ENCODE measurements at regions of chr15 and their contacts with region 1.

Region 1: GRCh38 chr15:82046666-82047452 is 1.0 kb upstream of the MEX3B start:
- DNase-seq: peak; percentile 95 to 99 (median 98)
- H3K4me3 ChIP-seq: peak overlapping the region; percentile 80 to 96 (median 90)
- H3K27ac ChIP-seq: peak overlapping the region; percentile 81 to 89
- H3K4me1 ChIP-seq: peaks cover 0 to 29% (median 27%) of the 10 kb centered on the region in 4 experiments
- H3K27me3 ChIP-seq: peaks cover 0 to 3% (median 0%) of the 10 kb centered on the region in 5 experiments

Region 2: DNA sequence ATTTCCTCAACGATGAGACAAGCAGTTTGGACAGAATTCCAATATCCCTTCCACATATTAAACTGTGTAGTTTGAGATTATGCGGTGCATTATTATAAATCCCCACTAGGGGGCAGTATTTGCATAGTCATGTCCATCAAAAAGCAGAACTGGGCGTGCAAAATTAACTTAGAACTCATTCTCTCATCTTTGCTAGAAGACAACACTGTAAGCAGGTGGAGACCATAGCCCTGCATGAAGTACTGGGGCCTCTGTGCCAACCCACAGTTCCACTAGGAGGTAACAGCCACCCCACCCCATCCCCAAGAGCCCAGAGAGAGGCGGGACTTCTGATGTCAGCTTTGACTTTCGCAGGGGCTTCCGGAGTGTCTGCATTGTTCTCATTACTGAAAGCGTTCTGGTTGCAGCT is 566.2 kb before region 1 on chr15:
- CTCF ChIA-PET with region 1: interaction called, 10 read pairs
- POLR2A ChIA-PET with region 1: no interaction called
- DNase-seq: peak; percentile 64 to 81 (median 72)
- H3K4me3 ChIP-seq: no peak overlapping the region
- H3K27ac ChIP-seq: no peak overlapping the region
- H3K4me1 ChIP-seq: peaks cover 0 to 3% (median 0%) of the 10 kb centered on the region in 4 experiments
- H3K27me3 ChIP-seq: no peaks in the 10 kb centered on the region

Region 3: GRCh38 chr15:81924729-81925128 is 122.1 kb before region 1 on chr15:
- CTCF ChIA-PET with region 1: no interaction called
- POLR2A ChIA-PET with region 1: no interaction called
- DNase-seq: no peak
- H3K4me3 ChIP-seq: no peak overlapping the region
- H3K27ac ChIP-seq: no peak overlapping the region
- H3K4me1 ChIP-seq: no peaks in the 10 kb centered on the region
- H3K27me3 ChIP-seq: no peaks in the 10 kb centered on the region

Region 4: GRCh38 chr15:81977464-81977863 is 69.4 kb before region 1 on chr15:
- CTCF ChIA-PET with region 1: no interaction called
- POLR2A ChIA-PET with region 1: no interaction called
- DNase-seq: no peak
- H3K4me3 ChIP-seq: no peak overlapping the region
- H3K27ac ChIP-seq: no peak overlapping the region
- H3K4me1 ChIP-seq: peaks cover 0 to 7% (median 0%) of the 10 kb centered on the region in 4 experiments
- H3K27me3 ChIP-seq: no peaks in the 10 kb centered on the region

Region 5: GRCh38 chr15:82036461-82036860 is 10.4 kb before region 1 on chr15:
- CTCF ChIA-PET with region 1: no interaction called
- POLR2A ChIA-PET with region 1: no interaction called
- DNase-seq: no peak
- H3K4me3 ChIP-seq: no peak overlapping the region
- H3K27ac ChIP-seq: no peak overlapping the region
- H3K4me1 ChIP-seq: peaks cover 0 to 15% (median 3%) of the 10 kb centered on the region in 4 experiments
- H3K27me3 ChIP-seq: no peaks in the 10 kb centered on the region

Measured in common myeloid progenitor, CD34-positive (primary cell).